RWPE1 (cell line): ENCODE measurements at regions of chr5 and their contacts with region 1.

Region 1: GRCh38 chr5:24161559-24161958 is 483.2 kb downstream of the CDH10 start:
- DNase-seq: peak; percentile 45
- H3K27ac ChIP-seq: no peak overlapping the region
- CTCF ChIP-seq: no peak

Region 2: DNA sequence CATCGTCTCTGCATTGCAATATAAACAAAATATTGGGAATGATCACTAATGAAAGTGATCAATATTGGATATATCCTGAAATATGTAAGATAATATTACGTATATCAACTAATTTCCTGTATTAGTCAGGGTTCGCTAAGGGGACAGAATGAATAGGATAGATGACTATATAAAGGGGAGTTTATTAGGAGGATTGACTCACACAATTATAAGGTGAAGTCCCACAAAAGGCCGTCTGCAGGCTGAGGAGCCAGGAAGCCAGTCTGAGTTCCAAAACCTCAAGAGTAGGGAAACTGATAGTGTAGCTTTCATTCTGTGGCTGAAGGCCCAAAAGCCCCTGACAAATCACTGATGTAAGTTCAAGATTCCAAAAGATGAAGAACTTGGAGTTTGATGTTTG is 93.1 kb before region 1 on chr5:
- CTCF ChIA-PET with region 1: no interaction called
- POLR2A ChIA-PET with region 1: interaction called, 16 read pairs
- DNase-seq: no peak
- H3K27ac ChIP-seq: no peak overlapping the region
- CTCF ChIP-seq: no peak